ENCODE measurements at regions of chr1 and their contacts with region 1.

Region 1: DNA sequence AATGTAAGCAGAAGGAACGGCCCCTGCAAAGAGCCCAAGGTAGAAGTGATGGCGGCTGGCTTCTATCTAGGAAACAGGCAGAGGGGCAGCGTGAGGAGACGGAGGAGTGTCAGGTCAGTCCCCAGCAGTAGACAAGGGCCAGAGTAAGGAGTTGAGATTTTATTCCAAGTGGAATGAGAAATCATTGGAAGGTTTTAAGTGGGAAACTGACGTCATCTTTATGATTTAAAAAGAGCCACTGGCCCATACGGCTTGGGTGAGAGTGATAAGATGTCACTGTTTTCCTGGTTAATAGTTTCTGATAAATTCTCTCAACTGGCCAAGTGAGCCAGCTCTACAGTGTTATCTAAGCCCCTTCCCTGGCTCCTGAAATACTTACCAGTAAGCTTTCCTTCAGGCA is 103.2 kb upstream of the CAMK1G start:
- DNase-seq: no peak
- H3K4me3 Mint-ChIP-seq: no peak overlapping the region
- H3K27ac Mint-ChIP-seq: no peak overlapping the region
- H3K4me1 Mint-ChIP-seq: peaks cover 20% of the 10 kb centered on the region
- H3K27me3 Mint-ChIP-seq: no peaks in the 10 kb centered on the region
- CTCF ChIP-seq: no peak

Region 2: GRCh38 chr1:209222826-209223225 is 257.5 kb before region 1 on chr1:
- CTCF ChIA-PET with region 1: no interaction called
- POLR2A ChIA-PET with region 1: no interaction called
- intact Hi-C with region 1: no loop called
- DNase-seq: no peak
- H3K4me3 Mint-ChIP-seq: no peak overlapping the region
- H3K27ac Mint-ChIP-seq: no peak overlapping the region
- H3K4me1 Mint-ChIP-seq: no peaks in the 10 kb centered on the region
- H3K27me3 Mint-ChIP-seq: no peaks in the 10 kb centered on the region
- CTCF ChIP-seq: no peak

Region 3: DNA sequence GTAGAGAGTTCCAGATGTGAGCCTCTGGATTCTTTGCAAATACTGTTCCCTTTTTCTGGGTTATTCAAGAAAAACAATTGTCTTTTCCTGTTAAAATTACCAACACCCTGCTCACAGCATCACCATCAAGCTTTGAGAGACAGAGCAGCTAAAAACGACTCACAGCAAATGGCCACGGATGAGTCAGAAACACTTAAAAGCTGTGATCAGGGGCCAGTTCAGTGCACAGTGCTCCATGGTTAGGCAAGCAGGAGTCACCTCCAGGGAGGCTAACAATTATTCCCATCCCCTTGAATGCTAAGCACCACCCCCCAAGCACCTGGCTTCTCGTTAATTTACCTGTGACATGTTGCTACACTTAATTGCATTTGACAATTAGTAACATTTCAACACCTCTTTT is 25.2 kb before region 1 on chr1:
- CTCF ChIA-PET with region 1: interaction called, 169 read pairs
- POLR2A ChIA-PET with region 1: interaction called, 28 read pairs
- intact Hi-C with region 1: loop called (anchors 1 kb)
- DNase-seq: peak; percentile 44
- H3K4me3 Mint-ChIP-seq: no peak overlapping the region
- H3K27ac Mint-ChIP-seq: no peak overlapping the region
- H3K4me1 Mint-ChIP-seq: peaks cover 32% of the 10 kb centered on the region
- H3K27me3 Mint-ChIP-seq: peaks cover 25% of the 10 kb centered on the region
- CTCF ChIP-seq: no peak

Region 4: GRCh38 chr1:209643285-209644020 is 163.1 kb after region 1 on chr1:
- CTCF ChIA-PET with region 1: no interaction called
- POLR2A ChIA-PET with region 1: no interaction called
- intact Hi-C with region 1: no loop called
- DNase-seq: peak; percentile 61
- H3K4me3 Mint-ChIP-seq: peak overlapping the region; percentile 24
- H3K27ac Mint-ChIP-seq: peak overlapping the region; percentile 68
- H3K4me1 Mint-ChIP-seq: peaks cover 69% of the 10 kb centered on the region
- H3K27me3 Mint-ChIP-seq: no peaks in the 10 kb centered on the region
- CTCF ChIP-seq: no peak

Measured in MCF 10A (cell line).